Endothelial cell of umbilical vein (primary cell): ENCODE measurements at regions of chr11 and their contacts with region 1.

Region 1: GRCh38 chr11:111601979-111602864 is at the start of gene SIK2:
- DNase-seq: peak; percentile 95
- H3K4me3 ChIP-seq: peak within 1 kb of the TSS; percentile 66 to 80 (median 67)
- H3K27ac ChIP-seq: peak within 1 kb of the TSS; percentile 92
- H3K4me1 ChIP-seq: peaks cover 17% of the 10 kb centered on the region
- H3K27me3 ChIP-seq: no peaks in the 10 kb centered on the region
- CTCF ChIP-seq: peak; percentile 88 to 100
- POLR2A ChIP-seq: no peak
- total RNA-seq, gene SIK2: 11.7 and 14.6 TPM in 2 replicates

Region 2: GRCh38 chr11:111635706-111636045 is 33.5 kb after region 1 on chr11:
- CTCF ChIA-PET with region 1: interaction called, 10 read pairs
- POLR2A ChIA-PET with region 1: no interaction called
- dilution Hi-C with region 1: no loop called
- intact Hi-C with region 1: no loop called
- DNase-seq: no peak
- H3K4me3 ChIP-seq: no peak overlapping the region
- H3K27ac ChIP-seq: no peak overlapping the region
- H3K4me1 ChIP-seq: peaks cover 23% of the 10 kb centered on the region
- H3K27me3 ChIP-seq: no peaks in the 10 kb centered on the region
- CTCF ChIP-seq: no peak
- POLR2A ChIP-seq: no peak

Region 3: DNA sequence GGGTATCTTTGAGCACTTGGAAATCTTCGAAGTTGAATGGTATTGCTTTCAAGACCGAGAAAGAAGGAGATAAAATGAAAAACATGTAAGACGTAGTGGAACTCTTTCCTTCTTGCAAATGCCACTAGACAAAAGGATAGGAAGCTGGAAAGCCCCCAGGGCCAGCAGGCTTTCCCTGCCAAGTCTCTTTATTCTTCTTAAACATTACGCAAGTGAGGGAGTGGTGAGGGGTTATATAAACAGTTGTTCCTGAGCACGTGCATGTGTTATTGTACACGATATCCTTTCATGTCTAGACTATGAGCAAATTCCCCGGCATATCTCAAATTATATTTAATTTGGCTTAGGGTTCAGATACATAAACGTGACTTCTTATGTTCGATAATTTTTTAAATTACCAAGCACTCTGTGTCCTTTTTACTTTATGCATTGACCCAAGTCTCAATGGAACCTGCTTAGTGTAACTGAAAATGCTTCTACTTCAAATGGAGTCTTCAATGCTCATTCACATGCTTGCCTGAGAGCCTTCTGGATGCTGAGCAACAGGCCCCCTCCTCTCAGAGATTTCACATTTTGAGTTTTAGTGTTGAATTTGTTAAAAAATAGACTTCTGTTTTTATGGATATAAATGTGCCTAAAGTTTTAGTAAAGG is 104.9 kb after region 1 on chr11:
- CTCF ChIA-PET with region 1: interaction called, 9 read pairs
- POLR2A ChIA-PET with region 1: no interaction called
- dilution Hi-C with region 1: no loop called
- intact Hi-C with region 1: loop called (anchors 1 kb)
- DNase-seq: peak; percentile 99
- H3K4me3 ChIP-seq: no peak overlapping the region
- H3K27ac ChIP-seq: peak overlapping the region; percentile 77
- H3K4me1 ChIP-seq: peaks cover 15% of the 10 kb centered on the region
- H3K27me3 ChIP-seq: no peaks in the 10 kb centered on the region
- CTCF ChIP-seq: no peak
- POLR2A ChIP-seq: peak; percentile 24

Region 4: DNA sequence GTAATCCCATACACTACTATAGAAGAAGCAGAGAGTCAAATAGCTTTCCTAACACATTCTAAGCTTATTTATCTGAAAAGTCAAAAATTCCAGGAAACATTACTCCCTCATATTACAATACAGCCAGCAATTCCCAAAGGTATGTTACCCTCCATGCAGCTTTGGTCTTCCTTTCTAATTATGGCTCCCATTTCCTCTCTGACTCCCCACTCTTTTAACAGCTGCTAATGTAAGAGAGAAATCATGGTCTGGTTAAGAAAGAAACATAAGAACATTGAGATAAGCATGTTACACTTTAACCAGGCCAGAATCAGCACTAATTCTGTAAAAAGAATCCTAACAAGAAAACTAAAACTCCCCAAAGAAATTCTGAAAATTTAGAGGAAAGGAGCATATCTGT is 157.2 kb after region 1 on chr11:
- CTCF ChIA-PET with region 1: interaction called, 42 read pairs
- POLR2A ChIA-PET with region 1: no interaction called
- dilution Hi-C with region 1: no loop called
- intact Hi-C with region 1: no loop called
- DNase-seq: peak; percentile 20
- H3K4me3 ChIP-seq: no peak overlapping the region
- H3K27ac ChIP-seq: no peak overlapping the region
- H3K4me1 ChIP-seq: no peaks in the 10 kb centered on the region
- H3K27me3 ChIP-seq: no peaks in the 10 kb centered on the region
- CTCF ChIP-seq: no peak
- POLR2A ChIP-seq: no peak

Region 5: DNA sequence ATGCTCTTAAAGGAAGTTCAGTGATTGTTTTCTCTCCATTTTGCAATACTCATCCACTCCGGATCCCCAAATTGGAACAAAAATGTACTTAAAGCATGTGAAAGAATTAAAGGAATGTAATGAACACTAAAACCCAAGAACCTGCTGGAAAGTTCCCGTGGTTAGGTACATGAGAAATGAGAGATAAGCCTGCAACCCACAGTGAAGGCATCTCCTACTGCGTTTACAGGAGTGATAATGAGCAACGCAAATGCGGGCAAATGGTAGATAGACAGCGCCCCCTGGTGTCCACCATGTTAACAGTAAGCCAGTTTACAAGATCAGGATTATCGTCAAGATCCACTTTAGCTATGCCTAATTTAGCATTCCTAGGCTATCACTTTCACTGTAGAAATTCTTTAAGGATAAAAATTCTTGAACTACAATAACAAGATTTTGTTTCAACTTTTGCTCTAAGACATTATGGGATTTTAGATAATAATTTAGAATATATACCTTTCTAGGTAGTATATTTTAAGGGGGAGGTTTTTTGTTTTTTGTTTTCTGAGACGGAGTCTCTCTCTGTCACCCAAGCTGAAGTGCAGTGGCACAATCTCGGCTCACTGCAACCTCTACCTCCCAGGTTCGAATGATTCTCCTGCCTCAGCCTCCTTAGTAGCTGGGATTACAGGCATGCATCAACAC is 239.3 kb after region 1 on chr11:
- CTCF ChIA-PET with region 1: interaction called, 15 read pairs
- POLR2A ChIA-PET with region 1: no interaction called
- dilution Hi-C with region 1: no loop called
- intact Hi-C with region 1: loop called (anchors 1 kb)
- DNase-seq: peak; percentile 86
- H3K4me3 ChIP-seq: no peak overlapping the region
- H3K27ac ChIP-seq: no peak overlapping the region
- H3K4me1 ChIP-seq: peaks cover 10% of the 10 kb centered on the region
- H3K27me3 ChIP-seq: no peaks in the 10 kb centered on the region
- CTCF ChIP-seq: peak; percentile 76 to 84
- POLR2A ChIP-seq: no peak

Region 6: DNA sequence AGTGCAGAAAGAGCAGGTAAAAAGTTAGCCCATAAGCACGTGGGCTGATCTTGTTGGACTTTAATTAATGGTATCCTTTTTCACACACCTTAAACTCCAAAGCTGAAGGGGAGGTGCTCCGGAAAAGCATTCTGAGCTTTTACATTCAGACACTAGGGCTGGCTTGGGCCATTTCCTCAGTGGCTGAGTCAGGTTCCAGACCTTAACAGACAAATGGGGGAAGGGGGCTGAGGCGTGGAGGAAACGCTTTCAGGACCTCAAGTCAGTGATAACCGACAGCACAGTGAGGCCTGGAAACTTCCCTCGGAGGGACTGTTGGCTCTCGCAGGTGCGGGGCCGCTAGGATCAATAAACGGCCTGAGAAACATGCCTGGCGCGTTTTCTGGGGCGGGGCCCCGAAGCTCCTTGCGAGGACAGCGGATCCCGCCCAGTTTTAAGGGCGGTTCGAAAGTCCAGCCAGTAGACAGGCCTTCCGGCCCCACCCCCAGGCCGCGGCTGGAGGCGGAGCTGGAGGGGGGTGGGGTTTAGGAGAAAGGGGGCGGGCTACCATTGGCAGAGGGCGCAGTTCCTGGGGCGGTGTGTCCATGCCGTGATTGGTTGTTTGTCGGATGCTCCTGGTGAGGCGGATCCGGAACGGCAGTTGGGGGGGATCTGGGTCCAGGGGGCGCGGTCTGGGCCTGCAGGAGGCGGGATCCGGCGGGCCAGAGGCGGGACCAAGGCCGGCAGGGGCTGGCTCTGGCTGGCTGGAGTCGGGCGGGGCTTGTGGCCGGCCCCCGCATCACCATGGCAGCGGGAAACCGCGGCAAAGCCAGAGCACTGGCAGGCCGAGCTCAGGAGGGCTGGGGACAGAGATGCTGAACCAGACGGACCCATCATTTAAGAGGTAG is 324.5 kb after region 1 on chr11:
- CTCF ChIA-PET with region 1: no interaction called
- POLR2A ChIA-PET with region 1: no interaction called
- dilution Hi-C with region 1: no loop called
- intact Hi-C with region 1: loop called (anchors 2 kb)
- DNase-seq: peak; percentile 98
- H3K4me3 ChIP-seq: peak overlapping the region; percentile 38 to 66 (median 38)
- H3K27ac ChIP-seq: peak overlapping the region; percentile 98
- H3K4me1 ChIP-seq: peaks cover 28% of the 10 kb centered on the region
- H3K27me3 ChIP-seq: no peaks in the 10 kb centered on the region
- CTCF ChIP-seq: peak in 1 of 2 donors; percentile 20
- POLR2A ChIP-seq: peak; percentile 88